MCF 10A (cell line): ENCODE measurements at regions of chr6 and their contacts with region 1.

Region 1: GRCh38 chr6:137707590-137708360 is 159.3 kb upstream of the TNFAIP3 start:
- DNase-seq: peak; percentile 88
- H3K4me3 Mint-ChIP-seq: peak overlapping the region; percentile 60
- H3K27ac Mint-ChIP-seq: peak overlapping the region; percentile 67
- H3K4me1 Mint-ChIP-seq: peaks cover 14% of the 10 kb centered on the region
- H3K27me3 Mint-ChIP-seq: no peaks in the 10 kb centered on the region
- CTCF ChIP-seq: peak; percentile 64

Region 2: GRCh38 chr6:137697267-137697938 is 10.4 kb before region 1 on chr6:
- CTCF ChIA-PET with region 1: interaction called, 10 read pairs
- POLR2A ChIA-PET with region 1: no interaction called
- intact Hi-C with region 1: no loop called
- DNase-seq: peak; percentile 27
- H3K4me3 Mint-ChIP-seq: no peak overlapping the region
- H3K27ac Mint-ChIP-seq: no peak overlapping the region
- H3K4me1 Mint-ChIP-seq: no peaks in the 10 kb centered on the region
- H3K27me3 Mint-ChIP-seq: no peaks in the 10 kb centered on the region
- CTCF ChIP-seq: no peak

Region 3: GRCh38 chr6:137975188-137975940 is 267.6 kb after region 1 on chr6:
- CTCF ChIA-PET with region 1: interaction called, 10 read pairs
- POLR2A ChIA-PET with region 1: interaction called, 7 read pairs
- intact Hi-C with region 1: loop called (anchors 1 kb)
- DNase-seq: peak; percentile 29
- H3K4me3 Mint-ChIP-seq: no peak overlapping the region
- H3K27ac Mint-ChIP-seq: no peak overlapping the region
- H3K4me1 Mint-ChIP-seq: peaks cover 11% of the 10 kb centered on the region
- H3K27me3 Mint-ChIP-seq: no peaks in the 10 kb centered on the region
- CTCF ChIP-seq: peak; percentile 53